H1 (cell line): ENCODE measurements at regions of chr11 and their contacts with region 1.

Region 1: GRCh38 chr11:128776424-128777284 is 82.8 kb downstream of the FLI1 start:
- DNase-seq: peak in 1 of 2 experiments; percentile 85
- H3K4me3 ChIP-seq: peak overlapping the region in 1 of 4 experiments; percentile 38; a peak in 3 of 8 replicates
- H3K27ac ChIP-seq: no peak overlapping the region
- H3K4me1 ChIP-seq: peaks cover 0 to 9% (median 4%) of the 10 kb centered on the region in 4 experiments; a peak in 4 of 7 replicates
- H3K27me3 ChIP-seq: peaks cover 0 to 6% (median 5%) of the 10 kb centered on the region in 4 experiments; a peak in 5 of 7 replicates
- CTCF ChIP-seq: peak; percentile 68 to 87 (median 85)
- EP300 ChIP-seq: no peak
- POLR2A ChIP-seq: no peak
- RAD21 ChIP-seq: peak; percentile 51 to 70

Region 2: DNA sequence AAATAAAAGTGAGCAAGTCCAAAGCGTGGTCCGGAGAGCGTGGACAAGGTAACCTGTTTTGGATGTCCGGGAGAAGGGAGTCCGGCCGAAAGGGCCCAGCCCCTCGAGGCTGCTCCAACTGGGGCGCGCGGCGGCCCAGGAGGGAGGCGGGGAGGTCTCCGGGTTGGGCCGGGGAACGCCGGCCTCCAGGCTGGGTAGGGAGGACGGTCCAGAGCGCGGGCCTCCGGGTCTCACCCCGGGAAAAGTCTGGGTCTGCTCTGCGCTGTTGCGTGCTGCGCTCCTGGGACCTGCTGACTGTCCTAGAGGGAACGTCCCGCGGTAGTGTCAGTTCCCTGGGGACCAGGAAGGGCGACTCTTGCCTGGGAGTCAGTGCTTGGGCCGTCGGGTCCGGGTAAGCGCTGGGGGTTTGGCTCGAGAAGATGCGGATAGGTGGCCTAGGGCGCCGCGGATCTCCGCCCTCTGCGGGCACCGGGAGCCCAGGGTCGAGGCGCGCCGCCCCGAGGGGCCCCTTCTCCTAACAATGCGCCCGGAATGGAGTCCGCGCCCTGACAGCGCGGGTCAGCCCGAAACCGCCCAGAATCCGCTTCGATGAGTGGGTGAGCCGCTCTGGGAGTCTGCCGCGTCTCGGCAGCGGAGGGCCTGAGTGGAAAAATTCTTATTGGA is 83.8 kb before region 1 on chr11:
- CTCF ChIA-PET with region 1: interaction called, 13 read pairs
- POLR2A ChIA-PET with region 1: interaction called, 3 read pairs
- DNase-seq: peak in 1 of 2 experiments; percentile 80
- H3K4me3 ChIP-seq: peak overlapping the region; percentile 37 to 70 (median 49)
- H3K27ac ChIP-seq: no peak overlapping the region
- H3K4me1 ChIP-seq: peaks cover 12 to 42% (median 16%) of the 10 kb centered on the region in 4 experiments
- H3K27me3 ChIP-seq: peaks cover 78 to 100% (median 97%) of the 10 kb centered on the region in 4 experiments
- CTCF ChIP-seq: no peak
- EP300 ChIP-seq: no peak
- POLR2A ChIP-seq: no peak
- RAD21 ChIP-seq: no peak

Region 3: GRCh38 chr11:128735935-128736605 is 40.6 kb before region 1 on chr11:
- CTCF ChIA-PET with region 1: interaction called, 23 read pairs
- POLR2A ChIA-PET with region 1: no interaction called
- DNase-seq: no peak
- H3K4me3 ChIP-seq: no peak overlapping the region
- H3K27ac ChIP-seq: no peak overlapping the region
- H3K4me1 ChIP-seq: peaks cover 7 to 17% (median 16%) of the 10 kb centered on the region in 4 experiments; a peak in 5 of 7 replicates
- H3K27me3 ChIP-seq: peaks cover 0 to 2% (median 0%) of the 10 kb centered on the region in 4 experiments; a peak in 2 of 7 replicates
- CTCF ChIP-seq: no peak
- EP300 ChIP-seq: no peak
- POLR2A ChIP-seq: no peak
- RAD21 ChIP-seq: no peak

Region 4: DNA sequence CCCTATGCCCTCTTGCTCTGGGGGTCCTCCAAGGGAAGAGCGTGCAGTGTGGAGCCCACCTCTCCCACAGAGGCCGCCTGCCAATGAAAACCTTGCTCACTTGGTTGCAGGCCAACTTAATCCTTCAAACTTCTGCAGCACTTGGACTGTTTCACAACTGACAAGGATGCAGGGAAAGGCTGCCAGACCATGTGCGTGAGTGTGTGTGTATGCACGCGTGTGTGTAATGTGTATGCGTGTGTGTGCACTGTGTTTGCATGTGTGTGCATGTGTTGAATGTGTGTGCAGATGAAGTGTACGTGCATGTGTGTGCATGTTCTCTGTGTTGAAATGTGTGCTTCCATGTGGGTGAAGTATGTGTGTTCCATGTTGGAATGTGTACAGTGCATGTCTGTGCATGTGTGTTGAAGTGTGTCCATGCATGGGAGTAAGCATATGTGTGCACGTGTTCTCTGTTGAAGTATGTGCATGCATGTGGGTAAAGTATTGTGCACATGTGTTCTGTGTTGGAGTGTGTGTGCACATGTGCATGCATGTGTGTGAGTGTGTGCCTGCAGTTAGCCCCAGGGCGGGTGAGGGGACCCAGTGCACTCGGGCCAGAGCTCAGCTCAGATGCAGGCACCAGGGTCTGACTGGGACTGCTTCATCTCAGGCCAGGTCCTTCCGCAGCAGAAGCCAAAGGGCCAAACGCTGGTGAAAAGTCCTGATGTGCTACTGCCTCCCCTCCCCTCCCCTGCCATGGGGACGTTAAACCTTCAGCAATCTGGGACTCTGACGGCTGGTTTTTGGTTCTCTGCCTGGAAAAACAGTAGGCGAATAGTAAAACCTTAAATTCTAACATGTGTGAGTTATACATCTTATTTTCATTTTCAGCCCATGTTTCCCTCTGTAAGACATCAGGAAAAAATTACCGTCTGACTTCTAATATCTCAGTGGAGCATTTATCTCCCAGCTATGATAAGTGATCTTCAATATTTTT is 10.8 kb before region 1 on chr11:
- CTCF ChIA-PET with region 1: interaction called, 53 read pairs
- POLR2A ChIA-PET with region 1: no interaction called
- DNase-seq: no peak
- H3K4me3 ChIP-seq: no peak overlapping the region
- H3K27ac ChIP-seq: no peak overlapping the region
- H3K4me1 ChIP-seq: peaks cover 0 to 4% (median 1%) of the 10 kb centered on the region in 4 experiments; a peak in 3 of 7 replicates
- H3K27me3 ChIP-seq: peaks cover 0 to 5% (median under 1%) of the 10 kb centered on the region in 4 experiments; a peak in 1 of 7 replicates
- CTCF ChIP-seq: no peak
- EP300 ChIP-seq: no peak
- POLR2A ChIP-seq: no peak
- RAD21 ChIP-seq: no peak

Region 5: DNA sequence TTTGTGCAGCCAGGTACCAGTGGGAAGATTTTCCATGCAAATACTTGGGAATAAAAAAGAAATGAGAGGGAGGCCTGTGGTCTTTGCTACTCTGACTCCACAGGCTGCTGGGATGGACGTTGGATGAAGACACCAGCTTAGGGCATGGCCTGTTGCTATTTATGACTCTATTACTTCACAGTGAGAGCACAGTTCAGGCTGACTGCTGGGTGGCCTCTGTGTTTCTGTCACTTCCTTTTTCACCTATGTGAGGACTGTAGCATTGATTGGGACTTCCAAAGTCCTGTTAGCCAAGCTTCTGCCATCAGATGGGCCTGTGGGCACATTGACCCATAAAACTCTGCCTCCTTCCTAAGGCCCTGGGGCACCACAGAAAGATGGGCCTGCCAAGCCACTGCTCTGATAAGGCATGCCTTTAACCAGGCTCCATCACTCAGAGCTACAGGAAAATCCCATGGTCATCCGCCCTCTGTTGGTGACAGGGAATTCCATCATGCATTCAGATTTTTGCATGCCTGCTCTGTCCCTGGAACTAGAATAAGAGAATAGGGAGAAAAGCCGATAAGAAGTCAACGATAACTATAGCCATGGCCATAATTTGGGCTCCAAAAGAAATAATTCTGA is 25.8 kb after region 1 on chr11:
- CTCF ChIA-PET with region 1: interaction called, 99 read pairs
- POLR2A ChIA-PET with region 1: no interaction called
- DNase-seq: peak in 1 of 2 experiments; percentile 67
- H3K4me3 ChIP-seq: no peak overlapping the region
- H3K27ac ChIP-seq: no peak overlapping the region
- H3K4me1 ChIP-seq: no peaks in the 10 kb centered on the region
- H3K27me3 ChIP-seq: no peaks in the 10 kb centered on the region
- CTCF ChIP-seq: peak; percentile 57 to 83 (median 77)
- EP300 ChIP-seq: no peak
- POLR2A ChIP-seq: no peak
- RAD21 ChIP-seq: peak; percentile 59 to 78

Region 6: DNA sequence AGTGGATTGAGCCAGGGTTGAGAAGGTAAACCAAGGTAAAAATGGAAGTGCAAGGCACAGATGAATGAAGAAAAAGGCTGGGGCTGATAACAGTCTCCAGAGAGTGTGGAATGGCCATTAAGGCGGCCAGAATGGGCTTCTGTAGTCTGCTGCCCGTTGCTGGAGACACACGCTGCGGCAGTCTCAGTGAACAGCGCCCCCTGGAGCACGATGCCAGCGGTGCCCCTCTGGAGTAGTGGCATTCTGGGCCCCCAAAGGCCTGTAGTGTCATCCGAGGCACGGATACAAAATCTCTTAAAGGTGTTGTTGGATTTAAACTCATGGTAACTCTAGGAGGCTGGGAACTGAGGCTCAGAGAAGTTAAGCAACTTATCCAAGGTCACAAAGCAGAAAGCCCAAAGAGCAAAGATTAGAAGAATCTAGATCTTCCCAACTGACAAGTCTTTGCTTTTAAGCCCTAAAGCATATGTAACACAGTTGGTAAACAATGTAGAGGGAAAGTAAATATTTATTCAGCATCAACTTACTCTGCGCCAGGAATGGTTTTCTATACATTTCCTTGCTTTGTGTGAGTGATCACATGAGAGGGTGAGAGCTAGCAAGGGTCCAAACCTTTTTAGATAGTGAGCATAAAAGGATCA is 72.3 kb after region 1 on chr11:
- CTCF ChIA-PET with region 1: interaction called, 11 read pairs
- POLR2A ChIA-PET with region 1: no interaction called
- DNase-seq: peak in 1 of 2 experiments; percentile 97
- H3K4me3 ChIP-seq: no peak overlapping the region
- H3K27ac ChIP-seq: no peak overlapping the region
- H3K4me1 ChIP-seq: no peaks in the 10 kb centered on the region
- H3K27me3 ChIP-seq: no peaks in the 10 kb centered on the region
- CTCF ChIP-seq: peak; percentile 94 to 98 (median 96)
- EP300 ChIP-seq: no peak
- POLR2A ChIP-seq: no peak
- RAD21 ChIP-seq: peak; percentile 72 to 85

Region 7: GRCh38 chr11:129056873-129057272 is 280.2 kb after region 1 on chr11:
- CTCF ChIA-PET with region 1: no interaction called
- POLR2A ChIA-PET with region 1: no interaction called
- DNase-seq: no peak
- H3K4me3 ChIP-seq: no peak overlapping the region
- H3K27ac ChIP-seq: no peak overlapping the region
- H3K4me1 ChIP-seq: no peaks in the 10 kb centered on the region
- H3K27me3 ChIP-seq: no peaks in the 10 kb centered on the region
- CTCF ChIP-seq: no peak
- EP300 ChIP-seq: no peak
- POLR2A ChIP-seq: no peak
- RAD21 ChIP-seq: no peak